Esophagus squamous epithelium (tissue), 5 donors: ENCODE measurements at regions of chr3 and their contacts with region 1.

Region 1: DNA sequence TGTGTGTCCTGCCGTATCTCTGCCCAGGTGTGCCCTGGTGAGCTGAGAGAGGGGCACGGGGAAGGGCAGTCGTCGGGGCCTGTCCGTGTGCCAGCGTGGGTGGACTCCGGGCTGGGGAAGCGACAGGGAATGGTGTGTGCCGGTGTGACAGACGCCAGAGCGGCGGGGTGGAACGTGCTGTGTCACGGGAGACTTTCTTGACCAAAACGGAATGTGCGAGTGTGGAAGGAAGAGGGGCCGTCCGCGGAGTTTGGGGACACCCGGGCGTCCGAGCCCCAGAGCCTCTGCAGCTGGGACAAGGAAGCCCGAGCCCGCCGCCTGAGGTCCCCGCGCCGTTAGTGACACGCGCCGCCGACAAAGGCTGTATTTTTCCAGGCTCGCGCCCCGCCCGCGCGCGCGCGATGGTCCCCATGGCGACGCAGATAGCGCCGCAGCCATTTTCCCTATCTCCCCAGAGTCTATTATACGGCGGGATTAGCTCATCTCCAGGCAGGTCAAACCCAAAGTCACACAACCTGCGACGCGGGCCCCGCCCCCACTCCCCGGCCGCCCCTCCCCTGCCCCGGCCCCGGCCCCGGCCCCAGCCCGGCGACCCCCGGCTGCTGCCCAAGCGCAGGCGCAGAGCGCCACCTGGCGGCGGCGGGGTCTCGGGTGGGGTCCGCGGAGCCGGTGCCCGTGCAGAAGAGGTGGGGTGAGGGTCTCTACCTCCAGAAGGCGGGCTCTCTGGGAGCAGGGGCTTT is 4.6 kb upstream of the GATA2 start:
- DNase-seq: no peak
- H3K4me3 ChIP-seq: peak overlapping the region; percentile 26 to 69 (median 47)
- H3K27ac ChIP-seq: no peak overlapping the region
- H3K4me1 ChIP-seq: peaks cover 9 to 42% (median 18%) of the 10 kb centered on the region in 3 donors
- H3K27me3 ChIP-seq: peaks cover 10 to 100% (median 28%) of the 10 kb centered on the region in 4 donors
- CTCF ChIP-seq: peak; percentile 42 to 59 (median 46)
- POLR2A ChIP-seq: no peak

Region 2: DNA sequence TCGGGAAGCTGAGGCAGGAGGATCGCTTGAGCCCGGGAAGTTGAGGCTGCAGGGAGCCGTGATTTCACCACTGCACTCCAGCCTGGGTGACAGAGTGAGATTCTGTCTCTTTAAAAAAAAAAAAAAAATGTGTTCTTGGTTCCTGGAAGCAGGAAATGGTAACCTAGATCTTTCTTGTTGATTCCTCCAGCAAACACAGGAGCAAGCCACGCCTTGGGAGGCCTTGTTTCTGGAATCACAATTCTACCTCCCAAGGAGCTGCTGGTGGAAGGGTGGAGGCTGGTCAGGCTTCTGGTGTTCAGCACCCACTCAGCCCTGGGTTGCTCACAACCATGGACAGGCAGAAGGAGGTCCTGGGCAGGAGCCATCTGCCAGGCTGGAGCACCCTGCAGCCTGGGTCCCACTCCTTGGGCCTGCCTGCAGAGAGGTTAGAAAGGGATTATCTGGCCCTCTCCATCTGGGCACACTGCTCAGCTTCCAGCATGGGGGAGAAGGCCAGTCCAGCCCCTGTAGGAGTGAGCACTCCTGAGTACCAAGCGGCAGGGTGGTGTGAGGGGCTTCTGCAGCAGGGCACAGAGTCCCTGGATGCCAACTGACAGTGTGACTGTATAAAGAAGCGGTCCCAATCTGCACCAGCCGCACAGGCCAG is 759.2 kb before region 1 on chr3:
- intact Hi-C with region 1: no loop called
- DNase-seq: no peak
- H3K4me3 ChIP-seq: no peak overlapping the region
- H3K27ac ChIP-seq: peak overlapping the region; percentile 20 to 75 (median 62)
- H3K4me1 ChIP-seq: peaks cover 19 to 65% (median 28%) of the 10 kb centered on the region in 3 donors
- H3K27me3 ChIP-seq: no peaks in the 10 kb centered on the region
- CTCF ChIP-seq: no peak
- POLR2A ChIP-seq: no peak

Region 3: GRCh38 chr3:128095222-128095703 is 402.3 kb before region 1 on chr3:
- intact Hi-C with region 1: loop called (anchors 10 kb)
- DNase-seq: no peak
- H3K4me3 ChIP-seq: no peak overlapping the region
- H3K27ac ChIP-seq: peak overlapping the region in 2 of 4 donors; percentile 21 to 25
- H3K4me1 ChIP-seq: peaks cover 0 to 15% (median 6%) of the 10 kb centered on the region in 3 donors
- H3K27me3 ChIP-seq: no peaks in the 10 kb centered on the region
- CTCF ChIP-seq: peak; percentile 39 to 95 (median 84)
- POLR2A ChIP-seq: no peak

Region 4: GRCh38 chr3:128242818-128243601 is 254.5 kb before region 1 on chr3:
- intact Hi-C with region 1: no loop called
- DNase-seq: no peak
- H3K4me3 ChIP-seq: no peak overlapping the region
- H3K27ac ChIP-seq: no peak overlapping the region
- H3K4me1 ChIP-seq: no peaks in the 10 kb centered on the region
- H3K27me3 ChIP-seq: no peaks in the 10 kb centered on the region
- CTCF ChIP-seq: no peak
- POLR2A ChIP-seq: no peak

Region 5: GRCh38 chr3:128426128-128426921 is 71.2 kb before region 1 on chr3:
- intact Hi-C with region 1: loop called (anchors 5 kb)
- DNase-seq: no peak
- H3K4me3 ChIP-seq: peak overlapping the region in 3 of 4 donors; percentile 21 to 56 (median 28)
- H3K27ac ChIP-seq: no peak overlapping the region
- H3K4me1 ChIP-seq: peaks cover 4 to 10% (median 7%) of the 10 kb centered on the region in 3 donors
- H3K27me3 ChIP-seq: peaks cover 0 to 61% (median 0%) of the 10 kb centered on the region in 4 donors
- CTCF ChIP-seq: peak; percentile 60 to 96 (median 90)
- POLR2A ChIP-seq: no peak

Region 6: GRCh38 chr3:128804017-128804810 is 306.7 kb after region 1 on chr3:
- intact Hi-C with region 1: no loop called
- DNase-seq: no peak
- H3K4me3 ChIP-seq: peak overlapping the region in 2 of 4 donors; percentile 16 to 52
- H3K27ac ChIP-seq: peak overlapping the region; percentile 47 to 70 (median 61)
- H3K4me1 ChIP-seq: peaks cover 5 to 71% (median 21%) of the 10 kb centered on the region in 3 donors
- H3K27me3 ChIP-seq: no peaks in the 10 kb centered on the region
- CTCF ChIP-seq: no peak
- POLR2A ChIP-seq: no peak